Breast epithelium (tissue), 4 donors: ENCODE measurements at regions of chr22 and their contacts with region 1.

Region 1: GRCh38 chr22:34776817-34777216 is 289.1 kb upstream of the ISX start:
- DNase-seq: no peak
- H3K4me3 ChIP-seq: no peak overlapping the region
- H3K27ac ChIP-seq: no peak overlapping the region
- H3K4me1 ChIP-seq: no peaks in the 10 kb centered on the region
- H3K27me3 ChIP-seq: no peaks in the 10 kb centered on the region
- CTCF ChIP-seq: no peak
- POLR2A ChIP-seq: no peak

Region 2: GRCh38 chr22:34798605-34799004 is 21.8 kb after region 1 on chr22:
- intact Hi-C with region 1: loop called (anchors 1 kb)
- DNase-seq: no peak
- H3K4me3 ChIP-seq: no peak overlapping the region
- H3K27ac ChIP-seq: no peak overlapping the region
- H3K4me1 ChIP-seq: peaks cover 0 to 9% of the 10 kb centered on the region in 2 donors
- H3K27me3 ChIP-seq: peaks cover 0 to 63% of the 10 kb centered on the region in 2 donors
- CTCF ChIP-seq: no peak
- POLR2A ChIP-seq: no peak